AG04449 (cell line): ENCODE measurements at regions of chr3 and their contacts with region 1.

Region 1: GRCh38 chr3:123739754-123740153 is 144.4 kb downstream of the MYLK start:
- DNase-seq: no peak
- H3K4me3 ChIP-seq: no peak overlapping the region
- CTCF ChIP-seq: no peak

Region 2: DNA sequence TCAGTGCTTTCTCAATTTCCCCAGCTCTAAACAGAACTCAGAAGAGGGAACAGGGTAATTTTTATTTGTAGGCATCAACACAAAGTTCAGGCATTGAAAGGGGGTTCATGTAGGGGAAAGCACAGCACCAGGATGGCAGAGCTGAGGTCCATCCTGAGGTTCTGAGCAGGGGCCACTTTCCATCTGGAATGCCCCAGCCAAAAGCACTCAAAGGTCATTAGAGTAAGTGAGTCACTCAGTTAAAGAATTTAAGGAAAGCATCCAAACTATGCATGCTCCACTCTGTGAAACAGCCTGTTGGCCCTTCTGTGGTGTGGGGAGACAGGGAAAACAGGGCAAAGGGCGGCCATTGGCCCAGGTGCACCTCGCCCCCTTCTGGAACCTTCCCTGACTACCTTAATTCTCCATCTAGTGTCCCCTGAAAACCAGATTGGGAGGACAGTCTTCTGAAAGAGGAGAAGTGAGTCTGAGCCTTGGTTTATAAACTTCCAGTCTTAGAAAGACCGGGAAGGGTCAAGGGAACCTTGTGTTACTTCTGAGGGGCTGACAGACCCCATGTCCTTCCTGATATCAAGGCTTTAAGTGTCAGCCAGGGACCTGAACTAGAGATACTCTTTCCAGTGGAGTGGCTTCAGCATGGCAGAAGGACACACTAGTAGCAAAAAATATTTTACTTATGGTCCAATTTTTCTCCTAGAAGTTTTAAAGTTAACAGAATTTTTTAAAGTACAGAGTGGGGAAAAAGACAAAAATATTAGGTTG is 11.1 kb after region 1 on chr3:
- CTCF ChIA-PET with region 1: interaction called, 23 read pairs
- POLR2A ChIA-PET with region 1: interaction called, 6 read pairs
- DNase-seq: no peak
- H3K4me3 ChIP-seq: no peak overlapping the region
- CTCF ChIP-seq: peak; percentile 17